Caco-2 (cell line): ENCODE measurements at regions of chr21 and their contacts with region 1.

Region 1: DNA sequence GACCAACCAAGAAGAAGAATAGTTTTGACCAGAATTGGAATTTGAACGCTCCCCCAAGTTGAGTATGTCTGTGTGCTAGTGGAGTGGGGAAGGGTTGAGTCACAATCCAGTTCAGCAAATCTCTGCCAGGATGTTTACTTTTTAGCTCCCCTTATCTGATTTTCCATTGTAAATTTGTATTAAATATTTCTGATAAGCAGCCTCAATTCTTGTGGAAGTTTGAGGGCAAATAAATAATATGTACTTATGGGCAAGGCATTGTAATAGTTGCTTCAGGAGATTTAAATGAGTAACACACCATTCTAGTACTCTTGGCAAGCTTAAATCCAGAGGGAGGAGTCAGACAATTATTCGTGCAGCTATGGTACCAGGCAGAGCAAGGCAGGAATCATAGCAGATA is 14.4 kb downstream of the CXADR start:
- DNase-seq: peak; percentile 55 to 56
- H3K4me3 ChIP-seq: no peak overlapping the region
- H3K4me3 Mint-ChIP-seq: peak overlapping the region; percentile 51
- H3K27ac Mint-ChIP-seq: peak overlapping the region; percentile 91
- H3K4me1 ChIP-seq: peaks cover 68% of the 10 kb centered on the region
- H3K4me1 Mint-ChIP-seq: peaks cover 43% of the 10 kb centered on the region
- H3K27me3 ChIP-seq: no peaks in the 10 kb centered on the region
- H3K27me3 Mint-ChIP-seq: no peaks in the 10 kb centered on the region
- CTCF ChIP-seq: no peak

Region 2: DNA sequence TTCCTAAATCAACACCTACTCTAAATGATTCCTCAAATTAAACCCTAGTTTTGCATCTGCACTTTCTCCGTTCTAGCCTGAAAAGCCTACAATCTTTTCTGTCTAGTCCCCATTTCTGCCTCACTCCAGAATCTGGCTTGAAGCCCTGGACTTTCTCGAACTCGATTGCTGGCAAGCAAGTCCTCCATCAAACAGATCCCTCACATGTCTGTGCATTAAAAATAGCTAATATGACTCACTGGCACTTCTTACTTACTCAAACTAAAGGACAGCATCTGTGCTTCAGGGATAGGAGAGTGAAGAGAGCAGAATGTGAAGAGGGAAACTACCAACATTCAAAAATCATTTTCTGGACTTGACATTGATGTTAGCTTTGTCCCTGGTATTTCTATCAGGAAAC is 66.2 kb before region 1 on chr21:
- CTCF ChIA-PET with region 1: no interaction called
- POLR2A ChIA-PET with region 1: no interaction called
- intact Hi-C with region 1: loop called (anchors 2 kb)
- DNase-seq: no peak
- H3K4me3 ChIP-seq: no peak overlapping the region
- H3K4me3 Mint-ChIP-seq: no peak overlapping the region
- H3K27ac Mint-ChIP-seq: no peak overlapping the region
- H3K4me1 ChIP-seq: peaks cover 19% of the 10 kb centered on the region
- H3K4me1 Mint-ChIP-seq: peaks cover 10% of the 10 kb centered on the region
- H3K27me3 ChIP-seq: no peaks in the 10 kb centered on the region
- H3K27me3 Mint-ChIP-seq: no peaks in the 10 kb centered on the region
- CTCF ChIP-seq: no peak

Region 3: DNA sequence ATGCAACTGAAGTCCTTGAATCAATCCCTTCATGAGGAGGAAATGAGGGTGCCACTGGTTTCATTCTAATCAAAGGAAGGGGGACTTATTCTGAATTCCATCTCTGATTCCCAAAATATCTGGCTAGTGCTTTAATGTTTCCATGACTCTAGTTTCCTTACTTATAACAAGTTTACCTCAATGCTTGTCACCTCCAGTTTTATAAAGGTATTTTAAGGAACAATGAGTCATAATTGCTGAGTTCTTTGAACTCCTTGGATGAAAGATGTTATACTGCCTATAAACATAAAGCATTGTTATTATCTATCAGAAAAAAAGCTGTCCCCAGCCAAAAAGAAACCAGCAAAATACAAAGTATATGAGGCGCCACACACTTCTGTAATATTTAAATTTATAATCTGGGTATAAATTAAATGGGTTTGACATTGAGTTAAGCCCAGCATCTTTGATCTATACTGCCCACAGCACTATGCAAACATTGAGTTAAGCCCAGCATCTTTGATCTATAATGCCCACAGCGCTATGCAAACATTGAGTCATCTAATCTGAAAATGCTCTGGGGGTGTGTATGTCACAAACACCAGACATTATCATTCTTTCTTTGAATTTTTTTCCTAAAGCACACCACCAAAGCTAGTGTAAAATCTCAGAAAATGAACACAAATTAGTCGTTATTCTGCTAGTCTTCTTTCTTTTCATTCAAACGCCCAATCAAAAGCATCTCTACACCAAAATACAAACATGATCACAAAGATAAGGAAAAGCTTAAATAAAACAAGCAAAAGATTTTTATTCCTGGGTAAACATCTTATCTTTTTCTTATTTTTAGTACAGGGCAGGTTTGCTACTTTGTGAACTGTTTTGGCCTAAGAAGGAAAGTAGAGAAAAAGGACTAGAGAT is 25.9 kb before region 1 on chr21:
- CTCF ChIA-PET with region 1: no interaction called
- POLR2A ChIA-PET with region 1: no interaction called
- intact Hi-C with region 1: loop called (anchors 1 kb)
- DNase-seq: peak; percentile 80 to 84
- H3K4me3 ChIP-seq: no peak overlapping the region
- H3K4me3 Mint-ChIP-seq: peak overlapping the region; percentile 19
- H3K27ac Mint-ChIP-seq: peak overlapping the region; percentile 76
- H3K4me1 ChIP-seq: peaks cover 43% of the 10 kb centered on the region
- H3K4me1 Mint-ChIP-seq: peaks cover 42% of the 10 kb centered on the region
- H3K27me3 ChIP-seq: no peaks in the 10 kb centered on the region
- H3K27me3 Mint-ChIP-seq: no peaks in the 10 kb centered on the region
- CTCF ChIP-seq: no peak

Region 4: DNA sequence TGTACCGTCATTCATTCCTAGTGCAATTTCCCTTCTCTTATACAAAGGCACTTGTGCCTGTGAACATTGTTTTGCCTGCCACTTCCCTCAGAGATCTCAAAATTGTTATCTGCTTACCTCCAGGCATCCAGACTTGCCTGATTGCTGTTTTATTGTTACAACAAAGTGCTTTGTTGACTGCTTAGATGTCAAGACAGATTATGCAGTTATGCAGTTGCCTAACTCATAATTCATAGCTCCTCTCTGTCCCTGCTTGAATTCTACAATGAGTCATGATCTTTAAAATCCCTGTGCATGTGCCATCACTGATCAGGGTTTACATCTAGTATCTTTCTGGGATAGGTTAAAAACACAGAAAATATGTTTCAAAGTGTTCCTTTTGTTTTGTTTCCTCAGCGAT is 10.1 kb after region 1 on chr21:
- CTCF ChIA-PET with region 1: no interaction called
- POLR2A ChIA-PET with region 1: no interaction called
- intact Hi-C with region 1: loop called (anchors 1 kb)
- DNase-seq: peak in 1 of 2 experiments; percentile 45
- H3K4me3 ChIP-seq: no peak overlapping the region
- H3K4me3 Mint-ChIP-seq: peak overlapping the region; percentile 38
- H3K27ac Mint-ChIP-seq: peak overlapping the region; percentile 66
- H3K4me1 ChIP-seq: peaks cover 48% of the 10 kb centered on the region
- H3K4me1 Mint-ChIP-seq: peaks cover 75% of the 10 kb centered on the region
- H3K27me3 ChIP-seq: no peaks in the 10 kb centered on the region
- H3K27me3 Mint-ChIP-seq: no peaks in the 10 kb centered on the region
- CTCF ChIP-seq: no peak

Region 5: GRCh38 chr21:17542371-17543011 is 15.3 kb after region 1 on chr21:
- CTCF ChIA-PET with region 1: no interaction called
- POLR2A ChIA-PET with region 1: no interaction called
- intact Hi-C with region 1: loop called (anchors 1 kb)
- DNase-seq: peak in 1 of 2 experiments; percentile 57
- H3K4me3 ChIP-seq: no peak overlapping the region
- H3K4me3 Mint-ChIP-seq: peak overlapping the region; percentile 54
- H3K27ac Mint-ChIP-seq: no peak overlapping the region
- H3K4me1 ChIP-seq: peaks cover 54% of the 10 kb centered on the region
- H3K4me1 Mint-ChIP-seq: peaks cover 71% of the 10 kb centered on the region
- H3K27me3 ChIP-seq: no peaks in the 10 kb centered on the region
- H3K27me3 Mint-ChIP-seq: no peaks in the 10 kb centered on the region
- CTCF ChIP-seq: no peak

Region 6: GRCh38 chr21:17631195-17631594 is 104.0 kb after region 1 on chr21:
- CTCF ChIA-PET with region 1: no interaction called
- POLR2A ChIA-PET with region 1: no interaction called
- intact Hi-C with region 1: no loop called
- DNase-seq: no peak
- H3K4me3 ChIP-seq: no peak overlapping the region
- H3K4me3 Mint-ChIP-seq: no peak overlapping the region
- H3K27ac Mint-ChIP-seq: no peak overlapping the region
- H3K4me1 ChIP-seq: no peaks in the 10 kb centered on the region
- H3K4me1 Mint-ChIP-seq: no peaks in the 10 kb centered on the region
- H3K27me3 ChIP-seq: no peaks in the 10 kb centered on the region
- H3K27me3 Mint-ChIP-seq: no peaks in the 10 kb centered on the region
- CTCF ChIP-seq: no peak

Region 7: GRCh38 chr21:17709266-17709611 is 182.0 kb after region 1 on chr21:
- CTCF ChIA-PET with region 1: no interaction called
- POLR2A ChIA-PET with region 1: no interaction called
- intact Hi-C with region 1: loop called (anchors 10 kb)
- DNase-seq: no peak
- H3K4me3 ChIP-seq: no peak overlapping the region
- H3K4me3 Mint-ChIP-seq: no peak overlapping the region
- H3K27ac Mint-ChIP-seq: no peak overlapping the region
- H3K4me1 ChIP-seq: peaks cover 4% of the 10 kb centered on the region
- H3K4me1 Mint-ChIP-seq: no peaks in the 10 kb centered on the region
- H3K27me3 ChIP-seq: no peaks in the 10 kb centered on the region
- H3K27me3 Mint-ChIP-seq: no peaks in the 10 kb centered on the region
- CTCF ChIP-seq: no peak